AG04450 (cell line): ENCODE measurements at regions of chr6 and their contacts with region 1.

Region 1: DNA sequence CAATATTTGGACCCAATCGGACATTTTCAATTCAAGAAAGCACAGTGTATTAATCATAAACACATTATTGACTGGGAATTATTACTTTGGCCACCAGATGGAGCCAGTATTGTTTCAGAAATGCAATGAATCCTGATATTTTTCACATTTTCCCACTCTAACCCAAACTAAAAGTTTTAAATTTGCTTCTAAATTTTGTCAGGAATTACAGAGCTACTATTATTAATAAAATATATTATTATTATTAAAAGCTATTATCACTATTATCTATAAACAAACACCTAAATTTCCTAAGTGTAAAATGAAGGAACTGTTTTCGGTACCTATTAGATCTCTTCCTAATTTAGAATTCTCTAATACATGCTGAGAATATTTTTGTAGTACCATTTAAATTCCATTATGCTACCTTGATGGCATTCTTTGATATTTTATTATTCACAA is 245.3 kb downstream of the OGFRL1 start:
- DNase-seq: no peak
- H3K4me3 ChIP-seq: no peak overlapping the region
- H3K27ac ChIP-seq: no peak overlapping the region
- H3K27me3 ChIP-seq: no peaks in the 10 kb centered on the region
- CTCF ChIP-seq: peak; percentile 70

Region 2: DNA sequence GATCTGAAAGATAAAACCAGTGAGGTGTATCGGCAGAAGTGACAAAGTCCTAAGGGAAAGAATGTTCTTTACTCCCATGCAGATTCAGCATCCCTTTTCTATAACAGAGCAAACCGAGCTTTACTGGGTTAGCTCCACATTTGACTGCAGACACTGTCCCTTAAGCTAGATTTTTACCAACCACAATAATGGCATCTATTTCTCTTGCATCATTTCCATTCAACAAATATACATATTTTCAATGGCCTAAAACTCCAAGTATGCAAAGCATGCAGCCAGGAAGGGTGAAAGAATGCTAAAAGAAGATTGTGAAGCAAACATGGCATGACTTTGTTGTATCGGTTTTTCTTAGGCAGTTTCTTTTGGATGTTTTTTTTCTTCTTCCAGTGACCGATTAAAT is 10.1 kb after region 1 on chr6:
- CTCF ChIA-PET with region 1: interaction called, 15 read pairs
- POLR2A ChIA-PET with region 1: no interaction called
- DNase-seq: peak; percentile 11
- H3K4me3 ChIP-seq: no peak overlapping the region
- H3K27ac ChIP-seq: no peak overlapping the region
- H3K27me3 ChIP-seq: no peaks in the 10 kb centered on the region
- CTCF ChIP-seq: no peak

Region 3: DNA sequence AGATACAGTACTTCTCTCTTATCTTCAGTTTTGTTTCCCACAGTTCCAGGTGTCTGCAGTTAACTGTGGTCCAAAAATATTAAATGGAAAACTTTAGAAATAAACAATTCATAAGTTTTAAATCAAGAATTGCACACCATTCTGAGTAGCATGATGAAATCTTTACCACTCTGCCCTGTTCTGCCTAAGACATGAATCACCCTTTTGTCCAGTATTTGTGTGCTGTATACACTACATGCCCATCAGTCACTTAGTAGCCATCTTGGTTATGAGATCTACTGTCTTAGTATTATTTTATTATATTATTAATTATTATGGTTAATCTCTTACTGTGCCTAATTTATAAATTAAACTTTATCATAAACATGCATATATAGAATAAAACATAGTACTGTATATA is 33.6 kb after region 1 on chr6:
- CTCF ChIA-PET with region 1: no interaction called
- POLR2A ChIA-PET with region 1: no interaction called
- DNase-seq: no peak
- H3K4me3 ChIP-seq: no peak overlapping the region
- H3K27ac ChIP-seq: no peak overlapping the region
- H3K27me3 ChIP-seq: no peaks in the 10 kb centered on the region
- CTCF ChIP-seq: no peak

Region 4: GRCh38 chr6:71599351-71599750 is 65.4 kb after region 1 on chr6:
- CTCF ChIA-PET with region 1: no interaction called
- POLR2A ChIA-PET with region 1: no interaction called
- DNase-seq: no peak
- H3K4me3 ChIP-seq: no peak overlapping the region
- H3K27ac ChIP-seq: no peak overlapping the region
- H3K27me3 ChIP-seq: no peaks in the 10 kb centered on the region
- CTCF ChIP-seq: no peak

Region 5: GRCh38 chr6:72084992-72085569 is 551.1 kb after region 1 on chr6:
- CTCF ChIA-PET with region 1: interaction called, 18 read pairs
- POLR2A ChIA-PET with region 1: no interaction called
- DNase-seq: no peak
- H3K4me3 ChIP-seq: no peak overlapping the region
- H3K27ac ChIP-seq: no peak overlapping the region
- H3K27me3 ChIP-seq: peaks cover 3% of the 10 kb centered on the region
- CTCF ChIP-seq: peak; percentile 48